ENCODE measurements at regions of chr16 and their contacts with region 1.

Region 1: GRCh38 chr16:84663433-84664101 is 15.3 kb downstream of the KLHL36 start:
- DNase-seq: peak; percentile 76
- H3K4me3 ChIP-seq: peak overlapping the region; percentile 42
- H3K27ac ChIP-seq: peak overlapping the region; percentile 53
- H3K4me1 ChIP-seq: peaks cover 26% of the 10 kb centered on the region
- CTCF ChIP-seq: peak; percentile 37; the same call in 1 of the 2 replicates

Region 2: GRCh38 chr16:84699712-84700445 is 36.3 kb after region 1 on chr16 and contains the start of gene USP10:
- CTCF ChIA-PET with region 1: no interaction called
- POLR2A ChIA-PET with region 1: interaction called, 12 read pairs
- intact Hi-C with region 1: no loop called
- DNase-seq: peak; percentile 89
- H3K4me3 ChIP-seq: peak within 1 kb of the TSS; percentile 97
- H3K27ac ChIP-seq: peak within 1 kb of the TSS; percentile 66
- H3K4me1 ChIP-seq: peaks cover 38% of the 10 kb centered on the region
- CTCF ChIP-seq: no peak
- total RNA-seq, gene USP10: 65.9 and 69.8 TPM in 2 replicates

Region 3: DNA sequence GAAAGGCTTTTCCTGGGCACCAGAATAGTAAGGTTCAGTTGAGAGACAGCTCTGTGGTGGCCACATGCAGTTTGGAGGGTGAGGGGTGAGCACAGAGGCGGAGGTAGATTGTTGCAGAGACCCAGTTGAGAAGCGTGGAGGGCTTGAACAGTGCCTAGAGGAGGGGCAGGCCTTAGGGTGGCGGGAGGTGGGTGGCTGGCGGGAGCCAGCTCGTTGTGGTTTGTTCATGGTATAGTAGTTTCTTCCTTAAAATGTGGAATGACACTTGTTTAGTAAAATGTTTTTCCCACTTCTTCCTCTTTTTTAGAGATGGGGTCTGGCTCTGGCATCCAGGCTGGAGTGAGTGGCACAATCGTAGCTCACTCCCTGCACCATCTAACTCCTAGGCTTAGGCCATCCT is 50.5 kb after region 1 on chr16:
- CTCF ChIA-PET with region 1: no interaction called
- POLR2A ChIA-PET with region 1: no interaction called
- intact Hi-C with region 1: no loop called
- DNase-seq: no peak
- H3K4me3 ChIP-seq: no peak overlapping the region
- H3K27ac ChIP-seq: no peak overlapping the region
- H3K4me1 ChIP-seq: peaks cover 29% of the 10 kb centered on the region
- CTCF ChIP-seq: no peak